ENCODE measurements at regions of chr16 and their contacts with region 1.

Region 1: DNA sequence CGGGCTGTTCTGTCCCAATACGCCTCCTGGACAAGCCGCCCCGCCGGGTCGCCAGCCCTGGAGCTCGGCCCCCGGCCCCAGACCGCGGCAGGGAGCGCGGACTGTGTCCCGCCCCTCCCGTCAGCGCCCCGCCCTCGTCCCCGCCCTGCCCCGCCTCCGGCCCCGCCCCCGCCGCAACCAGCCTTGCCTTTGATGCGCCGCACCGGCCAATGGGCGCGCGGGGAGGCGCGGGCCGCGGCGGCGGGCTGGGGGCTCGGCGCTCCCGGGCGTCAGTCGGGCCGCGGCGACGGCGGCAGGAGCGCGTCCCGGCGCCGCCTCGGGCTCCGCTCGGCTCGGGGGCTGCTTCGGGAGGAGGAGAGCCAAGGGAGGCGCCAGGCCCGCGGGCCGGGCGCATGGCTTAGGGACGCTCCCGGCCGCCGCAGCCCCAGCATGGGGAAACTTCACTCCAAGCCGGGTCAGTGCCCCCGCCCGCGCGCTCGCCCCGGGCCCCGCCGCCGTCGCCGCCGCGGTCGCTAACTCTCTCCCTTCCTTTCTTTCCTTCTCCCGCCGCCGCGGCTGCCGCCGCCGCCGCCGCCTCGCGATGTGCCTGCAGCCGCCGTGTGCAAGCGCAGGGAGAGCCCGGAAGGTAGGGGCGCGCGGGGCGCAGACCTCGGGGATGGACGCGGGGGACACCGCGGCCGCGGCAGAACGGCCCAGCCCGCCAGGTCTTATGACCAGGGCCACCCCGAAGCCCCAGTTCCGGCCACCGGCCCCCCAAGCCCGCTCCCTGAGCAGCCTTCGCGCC is at the start of gene NKD1:
- DNase-seq: peak; percentile 80
- ATAC-seq: peak; percentile 88
- H3K4me3 ChIP-seq: peak within 1 kb of the TSS; percentile 57 to 90 (median 80)
- H3K4me3 Mint-ChIP-seq: peak within 1 kb of the TSS; percentile 94
- H3K27ac ChIP-seq: no peak within 1 kb of the TSS
- H3K27ac Mint-ChIP-seq: peak within 1 kb of the TSS; percentile 77
- H3K4me1 ChIP-seq: peaks cover 6 to 12% of the 10 kb centered on the region in 2 donors
- H3K4me1 Mint-ChIP-seq: peaks cover 7% of the 10 kb centered on the region
- H3K27me3 ChIP-seq: peaks cover 0 to 30% (median 2%) of the 10 kb centered on the region in 4 experiments
- H3K27me3 Mint-ChIP-seq: peaks cover 32% of the 10 kb centered on the region
- CTCF ChIP-seq: no peak
- total RNA-seq, gene NKD1: 1.9 and 2.7 TPM in 2 replicates

Region 2: GRCh38 chr16:50152807-50153452 is 395.4 kb before region 1 on chr16 and contains the start of gene TENT4B:
- CTCF ChIA-PET with region 1: no interaction called
- POLR2A ChIA-PET with region 1: no interaction called
- intact Hi-C with region 1: loop called (anchors 5 kb)
- DNase-seq: peak; percentile 96
- ATAC-seq: peak; percentile 81
- H3K4me3 ChIP-seq: peak within 1 kb of the TSS; percentile 46 to 93 (median 82)
- H3K4me3 Mint-ChIP-seq: peak within 1 kb of the TSS; percentile 90
- H3K27ac ChIP-seq: peak within 1 kb of the TSS; percentile 85 to 86
- H3K27ac Mint-ChIP-seq: peak within 1 kb of the TSS; percentile 94
- H3K4me1 ChIP-seq: peaks cover 23 to 28% of the 10 kb centered on the region in 2 donors
- H3K4me1 Mint-ChIP-seq: peaks cover 34% of the 10 kb centered on the region
- H3K27me3 ChIP-seq: no peaks in the 10 kb centered on the region
- H3K27me3 Mint-ChIP-seq: no peaks in the 10 kb centered on the region
- CTCF ChIP-seq: no peak
- total RNA-seq, gene TENT4B: 17.1 and 18.6 TPM in 2 replicates

Region 3: DNA sequence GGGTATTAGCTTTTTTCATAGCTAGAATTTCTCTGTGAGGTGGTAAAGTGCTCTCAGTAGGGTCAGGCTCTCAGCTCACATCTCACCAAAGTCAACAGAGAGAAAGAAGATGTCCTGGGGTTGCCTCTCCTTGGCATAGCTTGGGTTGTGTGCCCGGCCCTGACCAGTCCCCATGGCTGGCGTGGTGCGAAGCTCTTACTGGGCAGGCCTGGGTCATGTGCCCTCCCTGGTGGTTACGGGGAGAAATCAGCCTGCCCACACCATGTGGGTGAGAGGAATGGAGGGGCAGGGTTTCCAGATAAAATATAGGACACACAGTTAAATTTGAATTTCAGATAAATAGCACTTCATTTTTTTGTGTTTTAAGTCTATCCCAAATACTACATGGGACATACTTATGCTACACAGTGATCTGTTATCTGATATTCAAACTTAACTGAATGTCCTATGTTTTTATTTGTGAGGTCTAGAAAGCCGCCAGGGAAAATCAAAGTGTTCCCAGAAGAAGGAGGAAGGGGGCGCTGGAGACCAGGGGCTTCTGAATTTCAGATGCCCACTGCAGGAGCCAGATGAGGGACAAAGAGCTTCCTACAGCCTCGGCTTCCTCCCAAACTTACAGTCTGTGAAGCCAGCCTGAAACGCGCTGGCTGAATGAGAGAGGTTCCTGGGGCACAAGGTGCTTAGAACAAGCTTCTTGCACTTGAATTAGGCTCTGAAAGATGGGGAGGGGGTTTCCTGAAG is 45.3 kb after region 1 on chr16:
- CTCF ChIA-PET with region 1: interaction called, 3 read pairs
- POLR2A ChIA-PET with region 1: no interaction called
- intact Hi-C with region 1: loop called (anchors 1 kb)
- DNase-seq: no peak
- ATAC-seq: no peak
- H3K4me3 ChIP-seq: no peak overlapping the region
- H3K4me3 Mint-ChIP-seq: no peak overlapping the region
- H3K27ac ChIP-seq: no peak overlapping the region
- H3K27ac Mint-ChIP-seq: no peak overlapping the region
- H3K4me1 ChIP-seq: peaks cover 11 to 16% of the 10 kb centered on the region in 2 donors
- H3K4me1 Mint-ChIP-seq: peaks cover 14% of the 10 kb centered on the region
- H3K27me3 ChIP-seq: no peaks in the 10 kb centered on the region
- H3K27me3 Mint-ChIP-seq: no peaks in the 10 kb centered on the region
- CTCF ChIP-seq: no peak

Region 4: GRCh38 chr16:50665128-50665878 is 117.0 kb after region 1 on chr16:
- CTCF ChIA-PET with region 1: interaction called, 19 read pairs
- POLR2A ChIA-PET with region 1: no interaction called
- intact Hi-C with region 1: loop called (anchors 1 kb)
- DNase-seq: peak; percentile 81
- ATAC-seq: peak; percentile 71
- H3K4me3 ChIP-seq: peak overlapping the region; percentile 43 to 59 (median 49)
- H3K4me3 Mint-ChIP-seq: peak overlapping the region; percentile 86
- H3K27ac ChIP-seq: peak overlapping the region in 1 of 2 donors; percentile 7
- H3K27ac Mint-ChIP-seq: peak overlapping the region; percentile 79
- H3K4me1 ChIP-seq: peaks cover 10 to 21% of the 10 kb centered on the region in 2 donors
- H3K4me1 Mint-ChIP-seq: peaks cover 25% of the 10 kb centered on the region
- H3K27me3 ChIP-seq: no peaks in the 10 kb centered on the region
- H3K27me3 Mint-ChIP-seq: no peaks in the 10 kb centered on the region
- CTCF ChIP-seq: peak; percentile 93

Region 5: GRCh38 chr16:50741808-50742575 is 193.7 kb after region 1 on chr16 and contains the start of gene CYLD:
- CTCF ChIA-PET with region 1: interaction called, 4 read pairs
- POLR2A ChIA-PET with region 1: no interaction called
- intact Hi-C with region 1: loop called (anchors 1 kb)
- DNase-seq: peak; percentile 100
- ATAC-seq: peak; percentile 86
- H3K4me3 ChIP-seq: peak within 1 kb of the TSS; percentile 75 to 96 (median 85)
- H3K4me3 Mint-ChIP-seq: peak within 1 kb of the TSS; percentile 91
- H3K27ac ChIP-seq: peak within 1 kb of the TSS; percentile 100
- H3K27ac Mint-ChIP-seq: peak within 1 kb of the TSS; percentile 97
- H3K4me1 ChIP-seq: peaks cover 34% of the 10 kb centered on the region in 2 donors
- H3K4me1 Mint-ChIP-seq: peaks cover 49% of the 10 kb centered on the region
- H3K27me3 ChIP-seq: no peaks in the 10 kb centered on the region
- H3K27me3 Mint-ChIP-seq: no peaks in the 10 kb centered on the region
- CTCF ChIP-seq: no peak
- total RNA-seq, gene CYLD: 160 and 166 TPM in 2 replicates

Region 6: GRCh38 chr16:50806099-50807062 is 258.1 kb after region 1 on chr16:
- CTCF ChIA-PET with region 1: interaction called, 5 read pairs
- POLR2A ChIA-PET with region 1: no interaction called
- intact Hi-C with region 1: loop called (anchors 2 kb)
- DNase-seq: peak; percentile 92
- ATAC-seq: peak; percentile 93
- H3K4me3 ChIP-seq: peak overlapping the region in 4 of 5 experiments; percentile 19 to 53 (median 44)
- H3K4me3 Mint-ChIP-seq: peak overlapping the region; percentile 81
- H3K27ac ChIP-seq: no peak overlapping the region
- H3K27ac Mint-ChIP-seq: peak overlapping the region; percentile 79
- H3K4me1 ChIP-seq: peaks cover 11 to 15% of the 10 kb centered on the region in 2 donors
- H3K4me1 Mint-ChIP-seq: peaks cover 20% of the 10 kb centered on the region
- H3K27me3 ChIP-seq: no peaks in the 10 kb centered on the region
- H3K27me3 Mint-ChIP-seq: peaks cover 15% of the 10 kb centered on the region
- CTCF ChIP-seq: peak; percentile 96